Right ventricle myocardium superior (tissue), 1 donor: ENCODE measurements at regions of chr9 and their contacts with region 1.

Region 1: DNA sequence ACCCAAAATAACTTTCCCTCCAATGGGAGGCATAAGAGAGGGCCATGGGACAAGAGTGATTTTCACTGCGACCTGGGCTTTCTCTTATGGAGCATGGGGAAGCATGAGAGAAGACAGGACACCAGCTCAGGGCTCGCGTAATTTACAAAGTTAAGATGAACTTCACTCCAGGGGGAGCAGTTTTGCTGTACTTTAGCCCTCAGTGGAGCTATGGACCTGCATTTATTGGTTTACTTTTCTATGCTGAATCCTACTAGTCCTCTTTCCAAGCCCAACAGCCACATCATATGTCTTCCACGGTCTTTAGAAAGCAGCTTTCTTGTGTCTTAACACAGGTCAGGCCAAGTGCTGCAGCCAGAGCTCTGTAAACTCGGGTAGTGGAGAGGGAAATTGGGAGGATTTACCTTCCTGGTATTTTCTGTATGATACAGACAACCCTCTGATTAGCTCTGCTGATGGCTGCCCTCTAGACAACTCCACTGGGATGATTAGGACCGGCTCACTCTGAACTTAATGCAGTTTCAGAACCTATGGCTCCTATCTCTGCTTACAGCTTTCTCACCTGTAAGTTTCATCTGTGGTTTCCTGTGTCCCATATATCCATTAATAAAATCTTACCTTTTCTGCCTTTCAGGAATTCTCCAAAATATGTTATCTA is 581.0 kb upstream of the RORB start:
- DNase-seq: no peak
- ATAC-seq: no peak

Region 2: GRCh38 chr9:73962792-73963191 is 46.6 kb after region 1 on chr9:
- intact Hi-C with region 1: loop called (anchors 10 kb)
- DNase-seq: no peak
- ATAC-seq: no peak

Region 3: DNA sequence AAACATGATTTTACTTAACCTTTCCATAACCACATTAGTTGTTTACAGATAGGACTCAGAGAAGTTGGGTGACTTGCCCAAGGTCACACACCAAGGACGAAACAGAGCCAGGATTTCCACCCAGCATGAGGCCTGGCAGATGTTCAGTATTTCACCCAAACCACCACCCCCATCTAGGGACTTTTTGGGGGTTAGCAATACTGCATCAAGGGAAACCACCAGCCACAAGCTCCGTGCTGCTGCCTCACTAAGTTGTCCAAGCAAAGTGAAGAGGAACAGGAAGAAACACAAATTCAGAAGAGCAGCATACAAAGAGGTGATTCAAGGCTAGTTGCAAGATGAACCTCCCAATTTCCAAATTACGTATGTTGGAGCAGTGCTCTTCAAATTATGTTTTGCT is 361.4 kb after region 1 on chr9:
- intact Hi-C with region 1: no loop called
- DNase-seq: no peak
- ATAC-seq: no peak